Dendritic cell treated with granulocyte-macrophage colony-stimulating factor and Interleukin-4, amounts not matched to agents 40 ng/mL and 50 ng/mL, for 4 days (primary cell): ENCODE measurements at regions of chr15 and their contacts with region 1.

Region 1: DNA sequence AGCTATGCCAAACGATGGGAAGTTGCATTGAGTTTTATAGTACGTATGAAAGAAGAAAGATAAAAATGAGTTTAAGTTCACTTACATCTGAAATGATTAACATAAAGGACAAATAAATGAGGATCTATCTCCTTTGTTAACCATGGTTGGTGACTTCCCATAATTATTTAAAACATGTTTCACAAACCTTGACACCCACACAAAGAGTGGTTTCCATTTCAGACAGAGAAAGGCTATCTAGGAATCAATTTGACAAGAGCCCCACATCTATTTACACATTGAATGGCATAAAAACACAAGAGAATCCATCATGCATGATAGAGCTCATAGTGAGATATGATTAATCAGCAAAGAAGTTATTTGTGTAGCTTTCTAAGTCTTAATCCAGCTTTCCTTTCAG is 14.2 kb upstream of the MTMR10 start:
- H3K4me3 Mint-ChIP-seq: no peak overlapping the region
- H3K27ac Mint-ChIP-seq: no peak overlapping the region
- H3K4me1 Mint-ChIP-seq: peaks cover 20% of the 10 kb centered on the region
- H3K27me3 Mint-ChIP-seq: peaks cover 17% of the 10 kb centered on the region

Region 2: GRCh38 chr15:31069360-31070000 is 63.8 kb after region 1 on chr15:
- intact Hi-C with region 1: no loop called
- H3K4me3 Mint-ChIP-seq: no peak overlapping the region
- H3K27ac Mint-ChIP-seq: no peak overlapping the region
- H3K4me1 Mint-ChIP-seq: no peaks in the 10 kb centered on the region
- H3K27me3 Mint-ChIP-seq: no peaks in the 10 kb centered on the region

Region 3: GRCh38 chr15:31079519-31079918 is 73.9 kb after region 1 on chr15:
- intact Hi-C with region 1: no loop called
- H3K4me3 Mint-ChIP-seq: no peak overlapping the region
- H3K27ac Mint-ChIP-seq: no peak overlapping the region
- H3K4me1 Mint-ChIP-seq: peaks cover 69% of the 10 kb centered on the region
- H3K27me3 Mint-ChIP-seq: peaks cover 2% of the 10 kb centered on the region

Region 4: GRCh38 chr15:31116423-31117030 is 110.9 kb after region 1 on chr15:
- intact Hi-C with region 1: loop called (anchors 5 kb)
- H3K4me3 Mint-ChIP-seq: no peak overlapping the region
- H3K27ac Mint-ChIP-seq: no peak overlapping the region
- H3K4me1 Mint-ChIP-seq: no peaks in the 10 kb centered on the region
- H3K27me3 Mint-ChIP-seq: peaks cover 4% of the 10 kb centered on the region